WTC11 (cell line): ENCODE measurements at regions of chr5 and their contacts with region 1.

Region 1: DNA sequence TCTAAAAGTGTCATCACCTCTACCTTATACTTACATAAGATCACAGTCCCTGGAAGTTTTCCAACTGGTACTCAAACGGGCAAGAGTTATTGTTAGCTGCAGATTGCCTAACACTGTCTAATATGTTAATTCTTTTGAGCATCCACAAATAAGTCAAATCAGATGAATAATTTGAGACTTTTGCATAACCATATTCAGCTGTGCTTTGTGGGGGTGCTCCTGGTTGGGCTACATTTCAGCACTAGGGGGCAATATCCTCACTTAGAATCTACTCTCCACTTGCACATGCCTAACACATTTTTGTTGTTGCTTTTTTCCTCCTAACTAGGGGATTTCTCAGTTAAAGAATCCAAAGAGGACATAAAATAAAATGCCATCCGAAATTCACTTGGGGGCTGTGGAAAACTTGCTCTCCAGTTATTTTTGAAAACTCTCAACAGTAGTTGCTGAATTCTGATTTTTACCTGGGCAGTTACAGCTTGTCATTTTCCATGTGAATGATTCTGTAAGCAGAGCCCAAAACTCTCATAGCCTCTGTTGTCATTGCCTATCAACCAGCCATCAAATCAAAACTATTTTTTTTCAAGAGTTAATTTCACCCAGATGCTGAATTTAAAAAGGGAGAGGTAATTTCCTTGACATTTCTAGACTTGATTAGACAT is 71.5 kb downstream of the TRIM36 start:
- DNase-seq: no peak
- ATAC-seq: peak; percentile 71
- H3K4me3 Mint-ChIP-seq: no peak overlapping the region
- H3K27ac Mint-ChIP-seq: no peak overlapping the region
- H3K4me1 Mint-ChIP-seq: peaks cover 42% of the 10 kb centered on the region
- H3K27me3 Mint-ChIP-seq: no peaks in the 10 kb centered on the region; the same call in none of the 2 replicates
- CTCF ChIP-seq: peak; percentile 54; the same call in 1 of the 2 replicates

Region 2: DNA sequence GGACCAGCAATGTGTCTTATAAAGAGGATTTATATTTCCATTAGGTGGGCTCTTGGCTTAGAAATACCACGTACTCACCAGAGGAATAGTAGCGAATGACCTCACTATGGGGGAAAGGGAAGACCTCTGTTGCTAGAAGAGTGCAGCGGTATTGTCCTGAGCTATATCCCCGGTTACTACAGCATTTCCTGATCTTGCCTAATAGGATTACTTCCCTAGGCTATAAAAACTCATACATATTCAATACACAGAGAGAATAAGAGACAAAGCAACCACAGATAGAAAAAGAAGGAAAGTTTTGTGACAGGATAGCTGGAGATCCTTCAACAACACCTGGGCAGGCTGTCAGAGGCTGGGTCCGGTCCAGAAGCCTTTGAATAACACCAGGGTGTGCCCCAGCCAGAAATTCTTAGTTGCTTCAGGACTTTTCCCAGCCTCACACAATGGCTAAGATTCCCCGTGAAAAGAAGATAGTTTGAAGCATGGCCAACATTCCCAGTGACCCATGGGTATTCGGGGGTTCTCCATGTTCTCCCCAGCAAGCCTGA is 13.9 kb before region 1 on chr5:
- CTCF ChIA-PET with region 1: interaction called, 16 read pairs
- POLR2A ChIA-PET with region 1: no interaction called
- DNase-seq: no peak
- ATAC-seq: no peak
- H3K4me3 Mint-ChIP-seq: no peak overlapping the region
- H3K27ac Mint-ChIP-seq: no peak overlapping the region
- H3K4me1 Mint-ChIP-seq: peaks cover 33% of the 10 kb centered on the region
- H3K27me3 Mint-ChIP-seq: peaks cover 4% of the 10 kb centered on the region; the same call in 1 of the 2 replicates
- CTCF ChIP-seq: no peak

Region 3: DNA sequence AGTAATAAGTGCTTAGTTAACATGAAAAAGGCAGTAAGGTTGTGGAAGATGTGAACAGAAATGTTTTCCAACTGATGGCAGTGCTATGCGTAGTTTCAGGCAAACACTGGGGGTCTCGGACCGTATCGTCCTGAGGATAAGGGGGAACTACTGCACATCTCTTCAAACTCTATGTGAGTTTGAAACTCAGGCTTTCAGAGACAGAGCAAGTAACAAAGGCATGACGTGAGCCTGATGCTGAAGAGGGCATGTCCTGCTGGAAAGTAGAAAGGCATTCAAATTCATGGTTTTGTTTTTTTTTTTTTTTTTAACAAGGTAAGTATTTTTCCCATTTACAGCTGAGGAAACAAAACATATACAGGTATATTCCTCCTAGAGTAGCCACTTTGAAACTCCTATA is 11.7 kb after region 1 on chr5:
- CTCF ChIA-PET with region 1: interaction called, 12 read pairs
- POLR2A ChIA-PET with region 1: no interaction called
- DNase-seq: no peak
- ATAC-seq: peak; percentile 84
- H3K4me3 Mint-ChIP-seq: peak overlapping the region; percentile 32
- H3K27ac Mint-ChIP-seq: peak overlapping the region; percentile 91
- H3K4me1 Mint-ChIP-seq: peaks cover 39% of the 10 kb centered on the region
- H3K27me3 Mint-ChIP-seq: no peaks in the 10 kb centered on the region
- CTCF ChIP-seq: no peak

Region 4: GRCh38 chr5:115116001-115116400 is 17.8 kb after region 1 on chr5:
- CTCF ChIA-PET with region 1: interaction called, 12 read pairs
- POLR2A ChIA-PET with region 1: no interaction called
- DNase-seq: no peak
- ATAC-seq: no peak
- H3K4me3 Mint-ChIP-seq: no peak overlapping the region
- H3K27ac Mint-ChIP-seq: no peak overlapping the region
- H3K4me1 Mint-ChIP-seq: peaks cover 11% of the 10 kb centered on the region
- H3K27me3 Mint-ChIP-seq: peaks cover 2% of the 10 kb centered on the region
- CTCF ChIP-seq: no peak

Region 5: GRCh38 chr5:115151208-115151805 is 53.1 kb after region 1 on chr5:
- CTCF ChIA-PET with region 1: interaction called, 10 read pairs
- POLR2A ChIA-PET with region 1: no interaction called
- DNase-seq: no peak
- ATAC-seq: peak; percentile 57
- H3K4me3 Mint-ChIP-seq: no peak overlapping the region
- H3K27ac Mint-ChIP-seq: no peak overlapping the region
- H3K4me1 Mint-ChIP-seq: peaks cover 28% of the 10 kb centered on the region
- H3K27me3 Mint-ChIP-seq: no peaks in the 10 kb centered on the region
- CTCF ChIP-seq: no peak

Region 6: DNA sequence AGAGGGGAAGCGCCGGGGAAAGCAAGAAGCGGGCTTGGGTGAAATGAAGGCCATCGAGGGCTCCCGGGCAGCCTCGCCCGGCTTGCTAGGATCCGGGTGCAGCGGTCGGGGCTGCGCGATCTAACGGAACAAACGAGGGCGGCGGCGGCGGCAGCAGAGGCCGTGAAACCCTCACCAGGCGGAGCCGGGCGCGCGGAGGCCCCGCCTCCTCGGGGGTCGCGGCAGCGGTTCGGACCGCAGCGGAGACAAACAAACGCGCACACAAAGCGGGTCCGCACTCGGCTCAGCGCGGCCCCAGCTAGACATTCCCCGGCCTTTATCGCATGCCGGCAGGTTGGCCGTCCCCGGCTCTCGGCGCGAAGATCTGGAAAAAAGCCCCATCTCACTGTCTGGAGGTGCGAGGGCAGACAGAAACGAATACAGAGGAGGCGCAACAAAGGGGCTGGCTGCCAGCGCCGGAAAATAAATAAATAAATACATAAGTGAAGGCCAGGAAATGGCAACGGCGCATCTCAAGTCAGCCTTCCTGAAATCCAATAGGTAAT is 82.1 kb after region 1 on chr5:
- CTCF ChIA-PET with region 1: interaction called, 18 read pairs
- POLR2A ChIA-PET with region 1: no interaction called
- DNase-seq: peak; percentile 79
- ATAC-seq: peak; percentile 78
- H3K4me3 Mint-ChIP-seq: peak overlapping the region; percentile 78
- H3K27ac Mint-ChIP-seq: no peak overlapping the region
- H3K4me1 Mint-ChIP-seq: peaks cover 15% of the 10 kb centered on the region
- H3K27me3 Mint-ChIP-seq: peaks cover 70% of the 10 kb centered on the region
- CTCF ChIP-seq: no peak